BJ (cell line): ENCODE measurements at regions of chr5 and their contacts with region 1.

Region 1: DNA sequence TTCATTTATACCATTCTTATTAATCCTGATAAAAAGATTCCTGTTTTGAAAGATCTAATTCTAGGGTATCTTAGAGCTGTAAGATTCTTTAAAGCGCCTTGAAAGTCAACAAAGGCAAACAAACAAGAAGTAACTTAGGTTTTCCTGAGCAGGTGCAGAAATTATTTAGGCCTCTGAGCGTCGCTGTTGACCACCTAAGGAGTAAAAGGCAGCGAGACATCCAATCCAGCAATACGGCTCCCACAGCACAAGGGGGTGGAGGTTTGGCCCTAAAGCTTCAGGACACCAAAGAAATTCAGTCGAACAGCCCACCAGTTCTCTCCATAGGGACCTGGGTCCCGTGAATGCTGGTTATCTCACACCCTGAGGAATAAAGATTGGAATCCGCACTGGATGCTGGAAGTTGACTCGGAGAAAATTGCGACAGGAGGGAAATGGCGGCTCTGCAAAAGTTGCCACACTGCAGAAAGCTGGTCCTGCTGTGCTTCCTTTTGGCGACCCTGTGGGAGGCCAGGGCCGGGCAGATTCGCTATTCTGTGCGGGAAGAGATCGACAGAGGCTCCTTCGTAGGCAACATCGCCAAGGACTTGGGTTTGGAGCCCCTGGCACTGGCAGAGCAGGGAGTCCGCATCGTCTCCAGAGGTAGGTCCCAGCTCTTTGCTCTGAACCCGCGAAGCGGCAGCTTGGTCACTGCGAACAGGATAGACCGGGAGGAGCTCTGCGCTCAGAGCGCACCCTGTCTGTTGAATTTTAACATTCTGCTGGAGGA is at the start of gene PCDHGA2:
- DNase-seq: no peak
- H3K4me3 ChIP-seq: peak within 1 kb of the TSS; percentile 38
- H3K27me3 ChIP-seq: no peaks in the 10 kb centered on the region
- CTCF ChIP-seq: peak; percentile 66
- polyA plus RNA-seq, gene PCDHGA2: 6.7 and 6.8 TPM in 2 replicates

Region 2: GRCh38 chr5:141326088-141326854 is 12.5 kb before region 1 on chr5:
- CTCF ChIA-PET with region 1: interaction called, 25 read pairs
- POLR2A ChIA-PET with region 1: no interaction called
- DNase-seq: no peak
- H3K4me3 ChIP-seq: peak overlapping the region; percentile 29
- H3K27me3 ChIP-seq: peaks cover 5% of the 10 kb centered on the region; the same call in 1 of the 2 replicates
- CTCF ChIP-seq: peak; percentile 79